Breast epithelium (tissue), 4 donors: ENCODE measurements at regions of chr6 and their contacts with region 1.

Region 1: DNA sequence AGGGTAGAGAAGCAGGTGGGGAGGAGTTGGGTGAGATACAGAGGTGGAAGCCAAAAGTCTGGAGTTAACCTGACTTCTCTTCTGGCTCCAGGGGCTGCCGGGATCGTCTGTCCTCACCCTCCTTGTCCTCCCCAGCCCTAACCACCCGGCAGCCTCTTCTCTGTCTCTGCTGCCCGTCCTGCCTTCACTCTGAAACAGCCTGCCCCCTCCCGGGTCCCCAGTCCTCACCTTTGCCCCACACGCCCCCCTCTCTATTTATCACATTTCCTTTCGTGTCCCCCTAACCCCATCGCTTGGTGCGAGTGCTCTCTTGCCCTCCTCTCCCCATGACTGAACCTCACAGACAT is 5.7 kb downstream of the RING1 start:
- DNase-seq: no peak
- H3K4me3 ChIP-seq: peak overlapping the region; percentile 44 to 65 (median 55)
- H3K27ac ChIP-seq: peak overlapping the region in 1 of 2 donors; percentile 25
- H3K4me1 ChIP-seq: no peaks in the 10 kb centered on the region
- H3K27me3 ChIP-seq: no peaks in the 10 kb centered on the region
- CTCF ChIP-seq: no peak
- POLR2A ChIP-seq: no peak

Region 2: GRCh38 chr6:33237741-33238140 is 23.8 kb after region 1 on chr6:
- intact Hi-C with region 1: loop called (anchors 1 kb)
- DNase-seq: peak in 1 of 2 donors; percentile 10
- H3K4me3 ChIP-seq: no peak overlapping the region
- H3K27ac ChIP-seq: no peak overlapping the region
- H3K4me1 ChIP-seq: no peaks in the 10 kb centered on the region
- H3K27me3 ChIP-seq: no peaks in the 10 kb centered on the region
- CTCF ChIP-seq: no peak
- POLR2A ChIP-seq: no peak